ENCODE measurements at regions of chr1 and their contacts with region 1.

Region 1: DNA sequence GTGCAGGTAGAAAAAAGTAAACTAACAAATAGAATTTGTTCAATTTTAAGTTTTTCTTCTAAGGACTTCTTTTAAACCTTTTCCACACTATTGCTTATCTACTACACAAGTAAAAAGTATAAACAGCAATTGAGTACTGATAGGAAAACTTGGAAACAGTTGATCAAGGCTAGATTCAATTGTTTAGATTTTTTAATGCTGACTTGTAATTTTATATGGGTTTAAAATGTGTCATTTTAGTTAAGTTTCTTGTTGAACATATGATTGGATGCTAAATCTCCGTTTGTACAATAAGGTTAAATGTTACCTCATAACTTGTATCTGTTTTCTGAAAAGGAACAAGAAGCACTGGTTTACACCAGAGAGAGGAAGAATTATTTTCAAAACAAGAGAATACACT is 5.5 kb downstream of the SASS6 start:
- DNase-seq: no peak
- H3K4me3 Mint-ChIP-seq: no peak overlapping the region
- H3K27ac Mint-ChIP-seq: no peak overlapping the region
- H3K4me1 Mint-ChIP-seq: peaks cover 27% of the 10 kb centered on the region
- H3K27me3 Mint-ChIP-seq: no peaks in the 10 kb centered on the region

Region 2: DNA sequence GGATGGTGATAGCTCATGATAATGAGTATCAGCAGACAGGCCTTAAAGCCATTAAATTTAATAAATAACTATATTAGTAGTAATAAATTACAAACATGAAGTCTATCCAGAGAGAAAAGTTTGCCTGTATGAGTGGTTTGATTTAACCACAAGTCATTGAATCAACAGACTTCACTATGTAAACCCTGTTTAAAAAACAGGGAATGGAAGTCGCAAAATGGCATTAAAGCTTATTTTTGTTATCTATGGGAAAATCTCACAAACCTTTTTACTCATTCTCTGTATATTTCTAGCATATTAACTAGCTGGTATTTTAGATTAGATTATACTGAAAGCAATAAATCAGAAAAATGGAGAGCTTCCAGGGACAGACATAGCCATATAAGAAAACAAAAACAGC is 39.8 kb before region 1 on chr1:
- intact Hi-C with region 1: loop called (anchors 5 kb)
- DNase-seq: no peak
- H3K4me3 Mint-ChIP-seq: no peak overlapping the region
- H3K27ac Mint-ChIP-seq: no peak overlapping the region
- H3K4me1 Mint-ChIP-seq: no peaks in the 10 kb centered on the region
- H3K27me3 Mint-ChIP-seq: no peaks in the 10 kb centered on the region

Region 3: DNA sequence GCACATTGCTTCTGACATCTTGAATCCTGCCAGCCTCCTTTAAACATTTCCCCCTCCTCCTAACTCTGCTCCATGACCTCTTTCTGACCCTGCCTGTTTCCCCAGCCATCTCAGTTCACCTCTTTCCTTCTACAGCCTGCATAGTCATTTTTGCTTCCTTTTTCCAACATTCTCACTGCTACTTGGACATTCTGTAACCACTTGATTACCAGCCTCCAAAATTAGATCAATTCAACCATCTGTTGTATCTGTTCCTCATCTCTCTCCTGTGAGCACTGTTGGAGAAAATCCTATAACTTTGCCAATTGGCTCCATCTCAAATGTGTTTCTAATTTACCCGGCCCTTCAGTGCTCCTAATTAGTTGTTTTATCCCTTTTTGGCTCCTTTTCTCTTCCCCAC is 383.2 kb after region 1 on chr1:
- intact Hi-C with region 1: no loop called
- DNase-seq: no peak
- H3K4me3 Mint-ChIP-seq: no peak overlapping the region
- H3K27ac Mint-ChIP-seq: no peak overlapping the region
- H3K4me1 Mint-ChIP-seq: no peaks in the 10 kb centered on the region
- H3K27me3 Mint-ChIP-seq: no peaks in the 10 kb centered on the region

Measured in activated T-helper 2 cell treated with anti-CD3 and anti-CD28 coated beads, Interferon-gamma antibody, Interleukin-2, Interleukin-4, amounts not matched to agents 10 μg/mL and 5 μg/mL and 100 μg/mL, durations not matched to agents 14 hours and 24 hours and 36 hours (primary cell).